B cell (primary cell): ENCODE measurements at regions of chr12 and their contacts with region 1.

Region 1: GRCh38 chr12:2890388-2891239 is at the start of gene TULP3:
- DNase-seq: peak; percentile 98
- ATAC-seq: peak; percentile 98
- H3K4me3 ChIP-seq: peak within 1 kb of the TSS; percentile 65 to 99 (median 85)
- H3K4me3 Mint-ChIP-seq: peak within 1 kb of the TSS; percentile 94
- H3K27ac ChIP-seq: peak within 1 kb of the TSS; percentile 60 to 89
- H3K27ac Mint-ChIP-seq: peak within 1 kb of the TSS; percentile 93
- H3K4me1 ChIP-seq: peaks cover 5 to 12% of the 10 kb centered on the region in 2 donors
- H3K4me1 Mint-ChIP-seq: peaks cover 26% of the 10 kb centered on the region
- H3K27me3 ChIP-seq: no peaks in the 10 kb centered on the region
- H3K27me3 Mint-ChIP-seq: no peaks in the 10 kb centered on the region
- CTCF ChIP-seq: no peak
- total RNA-seq, gene TULP3: 8.1 and 8.3 TPM in 2 replicates

Region 2: GRCh38 chr12:2769871-2770533 is 120.6 kb before region 1 on chr12:
- CTCF ChIA-PET with region 1: no interaction called
- POLR2A ChIA-PET with region 1: no interaction called
- intact Hi-C with region 1: no loop called
- DNase-seq: no peak
- ATAC-seq: no peak
- H3K4me3 ChIP-seq: no peak overlapping the region
- H3K4me3 Mint-ChIP-seq: no peak overlapping the region
- H3K27ac ChIP-seq: no peak overlapping the region
- H3K27ac Mint-ChIP-seq: no peak overlapping the region
- H3K4me1 ChIP-seq: no peaks in the 10 kb centered on the region
- H3K4me1 Mint-ChIP-seq: no peaks in the 10 kb centered on the region
- H3K27me3 ChIP-seq: no peaks in the 10 kb centered on the region
- H3K27me3 Mint-ChIP-seq: no peaks in the 10 kb centered on the region
- CTCF ChIP-seq: no peak

Region 3: GRCh38 chr12:2835691-2836589 is 54.7 kb before region 1 on chr12:
- CTCF ChIA-PET with region 1: no interaction called
- POLR2A ChIA-PET with region 1: interaction called, 11 read pairs
- intact Hi-C with region 1: no loop called
- DNase-seq: no peak
- ATAC-seq: no peak
- H3K4me3 ChIP-seq: no peak overlapping the region
- H3K4me3 Mint-ChIP-seq: no peak overlapping the region
- H3K27ac ChIP-seq: no peak overlapping the region
- H3K27ac Mint-ChIP-seq: no peak overlapping the region
- H3K4me1 ChIP-seq: no peaks in the 10 kb centered on the region
- H3K4me1 Mint-ChIP-seq: peaks cover 3% of the 10 kb centered on the region
- H3K27me3 ChIP-seq: peaks cover 0 to 3% (median 0%) of the 10 kb centered on the region in 4 experiments
- H3K27me3 Mint-ChIP-seq: no peaks in the 10 kb centered on the region
- CTCF ChIP-seq: no peak

Region 4: DNA sequence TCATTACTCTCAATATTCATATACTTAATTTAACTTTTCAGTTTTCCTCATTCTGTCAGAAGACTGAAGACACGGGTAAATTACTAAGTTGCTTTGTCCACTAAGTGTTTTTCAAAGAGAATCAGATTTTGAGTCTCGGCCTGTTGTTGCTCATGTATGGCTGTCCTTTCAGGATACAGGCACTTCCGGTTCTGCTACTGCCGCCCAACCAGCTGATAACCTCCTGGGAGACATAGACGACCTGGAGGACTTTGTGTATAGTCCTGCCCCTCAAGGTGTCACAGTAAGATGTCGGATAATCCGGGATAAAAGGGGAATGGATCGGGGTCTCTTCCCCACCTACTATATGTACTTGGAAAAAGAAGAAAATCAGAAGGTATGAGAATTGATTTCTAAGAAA is 40.3 kb after region 1 on chr12:
- CTCF ChIA-PET with region 1: no interaction called
- POLR2A ChIA-PET with region 1: no interaction called
- intact Hi-C with region 1: no loop called
- DNase-seq: no peak
- ATAC-seq: no peak
- H3K4me3 ChIP-seq: no peak overlapping the region
- H3K4me3 Mint-ChIP-seq: no peak overlapping the region
- H3K27ac ChIP-seq: no peak overlapping the region
- H3K27ac Mint-ChIP-seq: no peak overlapping the region
- H3K4me1 ChIP-seq: no peaks in the 10 kb centered on the region
- H3K4me1 Mint-ChIP-seq: no peaks in the 10 kb centered on the region
- H3K27me3 ChIP-seq: no peaks in the 10 kb centered on the region
- H3K27me3 Mint-ChIP-seq: no peaks in the 10 kb centered on the region
- CTCF ChIP-seq: no peak

Region 5: DNA sequence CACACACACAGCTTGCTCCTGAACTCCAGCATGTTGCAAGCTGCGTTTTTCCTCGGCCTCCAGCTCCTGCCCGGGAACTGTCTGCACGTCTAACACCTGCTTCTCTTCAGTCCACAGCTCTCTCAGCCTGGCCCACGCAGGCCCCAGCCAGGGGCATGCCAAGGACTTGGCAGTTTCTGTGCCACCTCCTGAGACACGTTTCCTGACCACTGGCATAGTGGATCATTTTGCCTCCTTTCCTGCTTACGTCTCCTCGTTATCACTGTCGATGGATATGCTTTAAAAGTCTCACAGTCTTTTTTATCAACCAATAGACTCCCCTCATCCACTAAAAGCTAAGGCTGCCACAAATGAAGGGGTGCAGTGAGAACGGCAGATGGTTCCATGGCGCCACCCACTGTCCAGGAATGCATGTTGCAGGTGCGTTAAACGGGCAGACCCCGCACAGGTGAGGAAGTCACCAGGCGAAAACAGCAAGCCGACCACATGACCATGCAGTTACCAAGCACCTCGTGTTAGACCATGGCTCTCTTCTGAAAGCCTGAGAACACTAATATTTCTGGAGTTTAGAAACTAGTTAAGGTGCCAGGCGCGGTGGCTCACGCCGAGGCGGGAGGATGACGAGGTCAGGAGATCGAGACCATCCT is 53.9 kb after region 1 on chr12:
- CTCF ChIA-PET with region 1: no interaction called
- POLR2A ChIA-PET with region 1: no interaction called
- intact Hi-C with region 1: loop called (anchors 2 kb)
- DNase-seq: peak; percentile 58
- ATAC-seq: no peak
- H3K4me3 ChIP-seq: no peak overlapping the region
- H3K4me3 Mint-ChIP-seq: no peak overlapping the region
- H3K27ac ChIP-seq: no peak overlapping the region
- H3K27ac Mint-ChIP-seq: no peak overlapping the region
- H3K4me1 ChIP-seq: peaks cover 0 to 5% of the 10 kb centered on the region in 2 donors
- H3K4me1 Mint-ChIP-seq: peaks cover 4% of the 10 kb centered on the region
- H3K27me3 ChIP-seq: no peaks in the 10 kb centered on the region
- H3K27me3 Mint-ChIP-seq: peaks cover 6% of the 10 kb centered on the region
- CTCF ChIP-seq: peak; percentile 67

Region 6: DNA sequence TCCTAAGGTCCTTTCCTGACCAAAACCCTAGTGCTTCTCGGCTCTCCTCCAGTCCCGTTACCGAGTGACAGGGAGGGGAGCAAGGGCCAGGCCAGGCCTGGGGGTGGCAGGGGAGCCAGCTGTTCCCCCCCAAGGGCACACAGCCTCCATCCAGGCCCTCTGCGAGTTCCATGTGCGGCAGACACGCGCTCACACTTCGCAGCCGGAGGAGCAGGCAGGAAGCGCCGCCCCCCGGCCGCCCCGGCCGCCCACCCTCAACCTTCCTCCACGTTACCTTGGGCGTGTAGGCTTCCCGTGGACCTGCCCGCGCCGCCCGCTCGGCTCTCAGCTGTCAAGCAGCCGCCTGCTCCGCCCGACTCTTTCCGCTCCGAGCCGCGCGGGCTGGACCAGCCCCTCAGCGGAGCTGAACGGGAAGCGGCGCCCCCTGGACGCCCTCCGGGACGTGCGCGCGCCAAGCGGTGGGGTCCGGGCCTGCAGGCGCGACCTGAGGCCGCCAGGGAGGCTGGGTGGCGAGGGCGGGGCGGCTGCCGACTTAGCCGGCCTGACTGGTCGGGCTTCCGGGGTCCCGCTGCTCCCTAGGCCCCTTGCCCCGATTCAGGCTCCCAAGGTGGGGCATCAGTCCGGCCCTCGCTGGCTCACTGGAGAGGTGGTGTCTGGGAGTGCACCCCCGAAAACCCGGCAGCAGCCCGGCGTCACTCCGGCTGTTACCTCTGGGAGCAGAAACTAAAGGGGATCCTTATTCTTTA is 862.3 kb after region 1 on chr12 and contains the start of gene CRACR2A:
- CTCF ChIA-PET with region 1: no interaction called
- POLR2A ChIA-PET with region 1: no interaction called
- intact Hi-C with region 1: loop called (anchors 5 kb)
- DNase-seq: peak; percentile 89
- ATAC-seq: peak; percentile 88
- H3K4me3 ChIP-seq: peak within 1 kb of the TSS; percentile 68 to 98 (median 82)
- H3K4me3 Mint-ChIP-seq: peak within 1 kb of the TSS; percentile 92
- H3K27ac ChIP-seq: peak within 1 kb of the TSS; percentile 92 to 95
- H3K27ac Mint-ChIP-seq: peak within 1 kb of the TSS; percentile 91
- H3K4me1 ChIP-seq: peaks cover 20 to 29% of the 10 kb centered on the region in 2 donors
- H3K4me1 Mint-ChIP-seq: peaks cover 34% of the 10 kb centered on the region
- H3K27me3 ChIP-seq: no peaks in the 10 kb centered on the region
- H3K27me3 Mint-ChIP-seq: no peaks in the 10 kb centered on the region
- CTCF ChIP-seq: peak; percentile 86
- total RNA-seq, gene CRACR2A: 26.1 and 26.8 TPM in 2 replicates

Region 7: DNA sequence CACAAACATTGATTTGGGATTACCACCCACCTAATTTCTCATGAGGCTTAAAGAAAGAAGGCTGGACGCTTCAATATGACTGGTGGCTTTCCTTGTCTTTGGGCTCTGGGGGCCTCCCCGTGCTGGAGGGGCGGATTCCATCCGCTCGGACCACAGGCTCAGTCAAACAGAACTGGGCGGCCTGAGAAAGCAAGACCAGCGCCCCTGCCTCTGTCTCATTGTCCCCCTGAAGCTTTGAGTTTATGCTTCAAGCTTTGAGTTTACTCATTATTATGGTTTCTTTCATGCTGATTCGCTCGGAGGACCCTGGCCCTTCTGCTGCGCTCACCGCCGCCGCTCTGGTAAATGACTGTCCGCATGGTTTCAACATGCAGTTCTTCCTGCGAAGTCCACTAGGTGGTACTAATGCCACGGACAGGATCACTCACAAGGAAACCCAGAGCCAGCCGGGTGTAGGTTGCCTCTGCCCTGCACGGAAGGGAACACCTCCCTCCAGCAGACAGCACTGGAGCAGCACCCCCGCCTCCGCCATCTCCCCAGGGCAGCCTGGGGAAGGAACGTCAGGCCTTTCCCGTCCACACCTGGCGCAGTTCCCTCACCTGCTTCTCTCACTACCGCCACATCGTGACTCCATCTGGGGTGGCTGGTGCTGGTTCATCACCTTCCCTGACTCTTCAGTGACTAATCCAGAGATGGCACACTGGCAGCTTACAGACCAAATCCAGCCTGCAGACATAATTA is 1417.1 kb after region 1 on chr12:
- CTCF ChIA-PET with region 1: no interaction called
- POLR2A ChIA-PET with region 1: no interaction called
- intact Hi-C with region 1: no loop called
- DNase-seq: peak; percentile 29
- ATAC-seq: peak; percentile 41
- H3K4me3 ChIP-seq: no peak overlapping the region
- H3K4me3 Mint-ChIP-seq: no peak overlapping the region
- H3K27ac ChIP-seq: no peak overlapping the region
- H3K27ac Mint-ChIP-seq: no peak overlapping the region
- H3K4me1 ChIP-seq: no peaks in the 10 kb centered on the region
- H3K4me1 Mint-ChIP-seq: no peaks in the 10 kb centered on the region
- H3K27me3 ChIP-seq: no peaks in the 10 kb centered on the region
- H3K27me3 Mint-ChIP-seq: no peaks in the 10 kb centered on the region
- CTCF ChIP-seq: no peak